A549 (cell line): ENCODE measurements at regions of chr15 and their contacts with region 1.

Region 1: GRCh38 chr15:79380755-79381497 is 51.2 kb upstream of the MINAR1 start:
- DNase-seq: peak; percentile 70 to 79
- ATAC-seq: peak; percentile 97 to 100
- H3K4me3 ChIP-seq: no peak overlapping the region
- H3K27ac ChIP-seq: no peak overlapping the region
- H3K4me1 ChIP-seq: no peaks in the 10 kb centered on the region
- CTCF ChIP-seq: peak; percentile 98
- EP300 ChIP-seq: no peak
- POLR2A ChIP-seq: no peak
- RAD21 ChIP-seq: peak; percentile 96

Region 2: DNA sequence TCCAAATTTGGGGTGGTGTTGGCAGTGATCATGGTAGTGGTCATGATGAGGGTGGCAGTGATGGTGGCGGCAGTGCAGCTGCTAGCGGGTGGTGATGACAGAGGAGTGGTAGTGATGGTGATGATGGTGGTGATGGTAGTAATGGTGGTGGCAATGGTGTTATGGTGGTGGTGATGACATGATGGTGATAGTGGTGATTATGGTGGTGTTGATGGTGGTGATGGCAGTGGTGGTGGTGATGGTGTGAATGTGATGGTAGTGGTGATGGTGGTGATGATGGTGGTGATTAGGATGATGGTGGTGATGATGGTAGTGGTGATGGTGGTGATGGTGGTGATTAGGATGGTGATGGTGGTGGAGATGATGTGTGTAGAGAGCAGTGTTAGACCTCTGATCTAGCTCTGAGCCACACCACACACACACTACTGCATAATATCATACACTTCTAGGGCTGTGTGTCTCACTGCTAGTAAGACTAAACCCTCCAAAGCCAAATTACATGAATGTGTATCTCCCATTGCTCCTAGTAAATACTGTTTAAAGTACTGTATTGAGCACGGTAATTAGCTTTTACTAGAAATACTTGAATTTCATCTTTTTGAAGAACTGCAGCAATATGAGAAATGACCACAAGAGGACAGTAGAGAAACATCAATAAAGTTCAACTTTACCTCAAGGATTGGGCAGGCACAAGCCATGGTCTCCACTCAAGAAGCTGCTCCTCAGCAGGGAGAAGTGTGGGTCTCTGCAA is 41.2 kb before region 1 on chr15:
- CTCF ChIA-PET with region 1: interaction called, 37 read pairs
- POLR2A ChIA-PET with region 1: no interaction called
- DNase-seq: peak; percentile 47 to 57
- ATAC-seq: peak; percentile 70 to 81
- H3K4me3 ChIP-seq: no peak overlapping the region
- H3K27ac ChIP-seq: no peak overlapping the region
- H3K4me1 ChIP-seq: no peaks in the 10 kb centered on the region
- CTCF ChIP-seq: peak; percentile 92
- EP300 ChIP-seq: no peak
- POLR2A ChIP-seq: no peak
- RAD21 ChIP-seq: peak; percentile 82 to 83

Region 3: DNA sequence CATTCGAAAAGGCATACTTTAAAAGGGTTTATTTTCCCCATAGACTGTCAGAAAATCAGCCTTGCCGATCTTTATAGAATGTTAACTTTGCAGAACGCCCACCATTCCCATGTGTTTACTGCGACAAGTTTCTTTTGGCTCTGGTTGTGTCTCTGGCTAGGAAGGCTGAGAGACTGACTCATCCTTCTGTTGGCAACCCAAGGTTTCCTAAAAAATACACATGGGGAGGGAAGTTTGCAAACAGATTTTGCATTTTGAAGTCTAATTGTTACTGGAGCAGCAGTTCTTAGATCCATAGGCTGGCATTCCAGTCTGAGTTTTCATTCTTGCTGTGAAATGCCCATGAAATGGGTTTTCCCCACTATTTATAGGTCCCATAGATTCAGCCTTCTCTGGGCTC is 13.3 kb after region 1 on chr15:
- CTCF ChIA-PET with region 1: interaction called, 54 read pairs
- POLR2A ChIA-PET with region 1: no interaction called
- DNase-seq: no peak
- ATAC-seq: no peak
- H3K4me3 ChIP-seq: no peak overlapping the region
- H3K27ac ChIP-seq: no peak overlapping the region
- H3K4me1 ChIP-seq: no peaks in the 10 kb centered on the region
- CTCF ChIP-seq: no peak
- EP300 ChIP-seq: no peak
- POLR2A ChIP-seq: no peak
- RAD21 ChIP-seq: no peak

Region 4: GRCh38 chr15:79450648-79451047 is 69.7 kb after region 1 on chr15:
- CTCF ChIA-PET with region 1: interaction called, 23 read pairs
- POLR2A ChIA-PET with region 1: no interaction called
- DNase-seq: no peak
- ATAC-seq: peak in 1 of 2 experiments; percentile 63; a peak in 2 of 6 replicates
- H3K4me3 ChIP-seq: no peak overlapping the region
- H3K27ac ChIP-seq: no peak overlapping the region
- H3K4me1 ChIP-seq: no peaks in the 10 kb centered on the region
- CTCF ChIP-seq: peak; percentile 45
- EP300 ChIP-seq: no peak
- POLR2A ChIP-seq: no peak
- RAD21 ChIP-seq: peak; percentile 43 to 45; a peak in 3 of 5 replicates

Region 5: DNA sequence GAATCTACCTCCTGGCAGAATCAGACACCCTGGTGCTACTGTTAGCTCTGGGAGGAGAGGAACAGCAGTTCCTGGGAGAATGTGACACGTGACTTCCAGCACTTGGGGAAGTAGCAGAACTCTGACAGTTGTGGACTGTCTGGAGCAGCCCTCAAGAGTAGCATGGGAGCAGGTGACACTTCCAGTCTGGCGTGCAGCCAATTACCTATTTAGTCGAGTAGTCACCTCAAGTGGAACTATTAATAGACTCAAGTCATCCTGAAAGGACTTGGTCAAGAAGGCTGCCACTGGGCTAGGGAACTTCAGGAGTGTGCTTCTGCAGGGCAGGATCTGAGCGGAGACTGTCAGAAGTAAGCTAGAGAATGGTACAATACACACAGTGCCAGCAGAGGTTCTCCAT is 453.6 kb after region 1 on chr15:
- CTCF ChIA-PET with region 1: interaction called, 12 read pairs
- POLR2A ChIA-PET with region 1: no interaction called
- DNase-seq: no peak
- ATAC-seq: no peak
- H3K4me3 ChIP-seq: no peak overlapping the region
- H3K27ac ChIP-seq: no peak overlapping the region
- H3K4me1 ChIP-seq: no peaks in the 10 kb centered on the region
- CTCF ChIP-seq: no peak
- EP300 ChIP-seq: no peak
- POLR2A ChIP-seq: no peak
- RAD21 ChIP-seq: no peak

Region 6: GRCh38 chr15:79863886-79864285 is 483.0 kb after region 1 on chr15:
- CTCF ChIA-PET with region 1: interaction called, 405 read pairs
- POLR2A ChIA-PET with region 1: no interaction called
- DNase-seq: no peak
- ATAC-seq: no peak
- H3K4me3 ChIP-seq: no peak overlapping the region
- H3K27ac ChIP-seq: no peak overlapping the region
- H3K4me1 ChIP-seq: no peaks in the 10 kb centered on the region
- CTCF ChIP-seq: no peak
- EP300 ChIP-seq: no peak
- POLR2A ChIP-seq: no peak
- RAD21 ChIP-seq: no peak